Naive thymus-derived CD4-positive, alpha-beta T cell (primary cell): ENCODE measurements at regions of chr11 and their contacts with region 1.

Region 1: DNA sequence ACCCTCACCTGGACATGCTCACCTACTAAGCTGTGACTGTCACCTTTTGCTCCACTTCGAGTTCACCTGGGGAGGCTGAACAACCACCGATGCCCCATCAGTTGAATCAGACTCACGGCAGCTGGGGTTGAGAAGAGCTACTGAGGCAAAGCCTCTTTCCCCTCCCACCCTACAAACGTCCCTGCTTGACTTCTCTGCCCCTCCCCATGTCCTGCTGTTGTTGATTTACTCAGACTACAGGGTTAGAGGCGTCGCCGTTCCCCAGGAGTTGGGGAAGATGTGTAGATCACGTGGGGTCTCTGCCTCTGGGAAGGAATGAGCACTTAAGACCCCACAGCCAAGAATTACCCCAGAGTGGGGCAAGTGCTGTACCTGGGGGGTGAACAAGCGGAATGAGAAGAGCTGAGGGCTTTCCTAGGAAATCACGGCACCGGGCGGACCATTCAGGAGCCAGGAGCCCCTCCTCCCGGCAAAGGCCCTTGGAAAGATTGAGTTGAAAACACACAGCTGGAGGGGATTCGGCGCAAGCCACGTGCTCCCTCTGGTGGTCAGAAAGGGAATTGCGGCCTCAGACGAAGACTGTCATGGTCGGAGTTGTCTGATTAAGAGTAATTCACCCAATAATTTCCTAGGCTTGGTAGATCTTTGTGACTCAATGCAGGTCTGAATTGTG is 7.0 kb downstream of the FXYD2 start:
- DNase-seq: peak; percentile 64 to 91 (median 76)
- ATAC-seq: peak; percentile 46
- H3K4me3 ChIP-seq: no peak overlapping the region
- H3K4me3 Mint-ChIP-seq: peak overlapping the region; percentile 4 to 83 (median 38)
- H3K27ac ChIP-seq: no peak overlapping the region
- H3K27ac Mint-ChIP-seq: peak overlapping the region; percentile 61 to 93 (median 80)
- H3K4me1 ChIP-seq: peaks cover 44 to 56% of the 10 kb centered on the region in 2 donors
- H3K4me1 Mint-ChIP-seq: peaks cover 35 to 63% (median 51%) of the 10 kb centered on the region in 7 donors
- H3K27me3 ChIP-seq: no peaks in the 10 kb centered on the region
- H3K27me3 Mint-ChIP-seq: no peaks in the 10 kb centered on the region

Region 2: GRCh38 chr11:116853461-116854073 is 963.9 kb before region 1 on chr11:
- CTCF ChIA-PET with region 1: no interaction called
- POLR2A ChIA-PET with region 1: no interaction called
- intact Hi-C with region 1: loop called in 1 of 2 experiments (anchors 10 kb)
- DNase-seq: peak in 8 of 9 donors; percentile 53 to 84 (median 77)
- ATAC-seq: peak; percentile 98
- H3K4me3 ChIP-seq: peak overlapping the region; percentile 38
- H3K4me3 Mint-ChIP-seq: peak overlapping the region; percentile 47 to 84 (median 70)
- H3K27ac ChIP-seq: peak overlapping the region; percentile 4
- H3K27ac Mint-ChIP-seq: peak overlapping the region; percentile 41 to 92 (median 81)
- H3K4me1 ChIP-seq: peaks cover 57 to 70% of the 10 kb centered on the region in 2 donors
- H3K4me1 Mint-ChIP-seq: peaks cover 52 to 78% (median 76%) of the 10 kb centered on the region in 7 donors
- H3K27me3 ChIP-seq: no peaks in the 10 kb centered on the region
- H3K27me3 Mint-ChIP-seq: no peaks in the 10 kb centered on the region

Region 3: GRCh38 chr11:116879800-116880625 is 937.5 kb before region 1 on chr11:
- CTCF ChIA-PET with region 1: no interaction called
- POLR2A ChIA-PET with region 1: no interaction called
- intact Hi-C with region 1: no loop called
- DNase-seq: peak in 7 of 9 donors; percentile 31 to 54 (median 39)
- ATAC-seq: peak; percentile 84
- H3K4me3 ChIP-seq: no peak overlapping the region
- H3K4me3 Mint-ChIP-seq: no peak overlapping the region
- H3K27ac ChIP-seq: no peak overlapping the region
- H3K27ac Mint-ChIP-seq: peak overlapping the region in 4 of 9 donors; percentile 23 to 67 (median 46)
- H3K4me1 ChIP-seq: no peaks in the 10 kb centered on the region
- H3K4me1 Mint-ChIP-seq: peaks cover 0 to 18% (median 9%) of the 10 kb centered on the region in 7 donors
- H3K27me3 ChIP-seq: no peaks in the 10 kb centered on the region
- H3K27me3 Mint-ChIP-seq: no peaks in the 10 kb centered on the region

Region 4: GRCh38 chr11:117426269-117426685 is 391.2 kb before region 1 on chr11:
- CTCF ChIA-PET with region 1: interaction called, 12 read pairs
- POLR2A ChIA-PET with region 1: no interaction called
- intact Hi-C with region 1: loop called in 1 of 2 experiments (anchors 2 kb)
- DNase-seq: peak; percentile 7 to 77 (median 48)
- ATAC-seq: peak; percentile 73
- H3K4me3 ChIP-seq: no peak overlapping the region
- H3K4me3 Mint-ChIP-seq: peak overlapping the region in 5 of 10 donors; percentile 20 to 53 (median 42)
- H3K27ac ChIP-seq: no peak overlapping the region
- H3K27ac Mint-ChIP-seq: no peak overlapping the region
- H3K4me1 ChIP-seq: no peaks in the 10 kb centered on the region
- H3K4me1 Mint-ChIP-seq: peaks cover 0 to 13% (median 10%) of the 10 kb centered on the region in 7 donors
- H3K27me3 ChIP-seq: no peaks in the 10 kb centered on the region
- H3K27me3 Mint-ChIP-seq: peaks cover 0 to 15% (median 3%) of the 10 kb centered on the region in 5 donors

Region 5: GRCh38 chr11:117828611-117829368 is 11.3 kb after region 1 on chr11:
- CTCF ChIA-PET with region 1: interaction called, 19 read pairs
- POLR2A ChIA-PET with region 1: interaction called, 6 read pairs
- intact Hi-C with region 1: loop called in 1 of 2 experiments (anchors 1 kb)
- DNase-seq: peak in 6 of 9 donors; percentile 19 to 82 (median 24)
- ATAC-seq: peak; percentile 88
- H3K4me3 ChIP-seq: no peak overlapping the region
- H3K4me3 Mint-ChIP-seq: peak overlapping the region in 7 of 10 donors; percentile 16 to 79 (median 48)
- H3K27ac ChIP-seq: peak overlapping the region; percentile 35
- H3K27ac Mint-ChIP-seq: peak overlapping the region in 6 of 9 donors; percentile 16 to 87 (median 60)
- H3K4me1 ChIP-seq: peaks cover 38 to 47% of the 10 kb centered on the region in 2 donors
- H3K4me1 Mint-ChIP-seq: peaks cover 48 to 72% (median 50%) of the 10 kb centered on the region in 7 donors
- H3K27me3 ChIP-seq: no peaks in the 10 kb centered on the region
- H3K27me3 Mint-ChIP-seq: peaks cover 0 to 2% (median 0%) of the 10 kb centered on the region in 5 donors

Region 6: DNA sequence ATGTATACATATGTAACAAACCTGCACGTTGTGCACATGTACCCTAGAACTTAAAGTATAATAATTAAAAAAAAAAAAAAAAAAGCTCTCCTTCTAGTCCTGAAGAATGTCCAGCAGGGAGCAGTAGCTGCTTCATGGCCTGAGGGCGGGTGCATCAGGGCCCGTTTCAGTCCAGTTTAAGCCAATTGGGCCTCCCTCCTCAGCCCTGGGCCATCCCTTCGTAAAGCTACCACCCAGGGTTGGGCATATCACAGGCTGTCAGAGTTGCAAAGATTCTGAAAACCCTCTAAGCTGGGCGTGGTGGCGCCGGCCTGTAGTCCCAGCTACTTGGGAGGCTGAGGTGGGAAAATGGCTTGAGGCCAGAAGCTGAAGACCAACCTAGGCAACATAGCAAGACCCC is 106.3 kb after region 1 on chr11:
- CTCF ChIA-PET with region 1: no interaction called
- POLR2A ChIA-PET with region 1: no interaction called
- intact Hi-C with region 1: no loop called
- DNase-seq: no peak
- ATAC-seq: no peak
- H3K4me3 ChIP-seq: no peak overlapping the region
- H3K4me3 Mint-ChIP-seq: no peak overlapping the region
- H3K27ac ChIP-seq: no peak overlapping the region
- H3K27ac Mint-ChIP-seq: no peak overlapping the region
- H3K4me1 ChIP-seq: peaks cover 0 to 3% of the 10 kb centered on the region in 2 donors
- H3K4me1 Mint-ChIP-seq: peaks cover 7 to 21% (median 9%) of the 10 kb centered on the region in 7 donors
- H3K27me3 ChIP-seq: no peaks in the 10 kb centered on the region
- H3K27me3 Mint-ChIP-seq: peaks cover 0 to 4% (median 0%) of the 10 kb centered on the region in 5 donors

Region 7: GRCh38 chr11:118002541-118003423 is 185.3 kb after region 1 on chr11:
- CTCF ChIA-PET with region 1: interaction called, 4 read pairs
- POLR2A ChIA-PET with region 1: interaction called, 3 read pairs
- intact Hi-C with region 1: loop called in 1 of 2 experiments (anchors 2 kb)
- DNase-seq: peak in 1 of 9 donors; percentile 70
- ATAC-seq: peak; percentile 55
- H3K4me3 ChIP-seq: peak overlapping the region; percentile 23
- H3K4me3 Mint-ChIP-seq: peak overlapping the region; percentile 1 to 82 (median 60)
- H3K27ac ChIP-seq: peak overlapping the region; percentile 58
- H3K27ac Mint-ChIP-seq: peak overlapping the region; percentile 51 to 98 (median 87)
- H3K4me1 ChIP-seq: peaks cover 64 to 96% of the 10 kb centered on the region in 2 donors
- H3K4me1 Mint-ChIP-seq: peaks cover 66 to 97% (median 80%) of the 10 kb centered on the region in 7 donors
- H3K27me3 ChIP-seq: no peaks in the 10 kb centered on the region
- H3K27me3 Mint-ChIP-seq: no peaks in the 10 kb centered on the region